ENCODE measurements at regions of chr3 and their contacts with region 1.

Region 1: GRCh38 chr3:187679638-187680396 is 9.6 kb upstream of the SST start:
- DNase-seq: peak; percentile 78
- H3K4me3 Mint-ChIP-seq: no peak overlapping the region
- H3K27ac Mint-ChIP-seq: no peak overlapping the region
- H3K4me1 Mint-ChIP-seq: no peaks in the 10 kb centered on the region
- H3K27me3 Mint-ChIP-seq: peaks cover 15% of the 10 kb centered on the region

Region 2: DNA sequence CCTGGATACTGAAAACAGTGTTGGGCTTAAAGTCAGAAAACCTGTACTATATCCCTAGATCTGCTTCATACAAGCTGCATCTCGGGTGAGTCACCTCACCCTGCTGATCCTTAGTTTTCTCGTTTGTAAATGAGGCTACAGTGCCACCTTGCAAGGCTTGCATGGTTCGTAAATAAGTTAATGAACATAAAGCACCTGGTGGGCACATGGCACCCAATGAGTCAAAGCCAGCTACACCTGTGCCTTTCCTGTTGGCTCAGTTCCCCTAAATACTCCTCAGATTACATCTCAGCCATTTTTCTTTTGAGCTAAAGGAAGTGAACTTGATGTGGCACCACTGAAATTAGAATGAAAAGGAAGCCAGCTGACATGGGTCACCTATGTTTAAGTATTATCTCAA is 456.0 kb before region 1 on chr3:
- CTCF ChIA-PET with region 1: interaction called, 34 read pairs
- DNase-seq: no peak
- H3K4me3 Mint-ChIP-seq: no peak overlapping the region
- H3K27ac Mint-ChIP-seq: no peak overlapping the region
- H3K4me1 Mint-ChIP-seq: no peaks in the 10 kb centered on the region
- H3K27me3 Mint-ChIP-seq: peaks cover 31% of the 10 kb centered on the region

Region 3: DNA sequence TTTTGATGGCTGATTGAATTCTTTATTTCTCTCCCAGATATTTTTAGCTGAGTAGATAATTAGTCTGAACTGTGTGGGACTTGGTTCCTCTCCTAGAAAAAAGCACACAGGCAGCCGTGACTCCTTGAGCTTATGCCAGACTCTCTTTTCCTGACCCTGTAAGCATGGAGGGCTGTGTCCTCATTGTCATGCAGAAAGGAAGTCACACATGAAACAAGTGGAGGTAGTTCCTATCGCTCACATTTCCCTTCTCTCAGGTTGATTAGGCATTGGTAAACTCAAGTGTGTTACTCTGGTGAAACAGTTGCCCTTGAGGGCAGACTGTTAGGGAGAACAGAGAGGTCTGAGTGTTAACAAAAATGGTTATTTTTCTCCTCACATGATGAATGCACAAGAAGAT is 318.0 kb before region 1 on chr3:
- CTCF ChIA-PET with region 1: no interaction called
- DNase-seq: no peak
- H3K4me3 Mint-ChIP-seq: no peak overlapping the region
- H3K27ac Mint-ChIP-seq: no peak overlapping the region
- H3K4me1 Mint-ChIP-seq: peaks cover 12% of the 10 kb centered on the region
- H3K27me3 Mint-ChIP-seq: no peaks in the 10 kb centered on the region

Region 4: DNA sequence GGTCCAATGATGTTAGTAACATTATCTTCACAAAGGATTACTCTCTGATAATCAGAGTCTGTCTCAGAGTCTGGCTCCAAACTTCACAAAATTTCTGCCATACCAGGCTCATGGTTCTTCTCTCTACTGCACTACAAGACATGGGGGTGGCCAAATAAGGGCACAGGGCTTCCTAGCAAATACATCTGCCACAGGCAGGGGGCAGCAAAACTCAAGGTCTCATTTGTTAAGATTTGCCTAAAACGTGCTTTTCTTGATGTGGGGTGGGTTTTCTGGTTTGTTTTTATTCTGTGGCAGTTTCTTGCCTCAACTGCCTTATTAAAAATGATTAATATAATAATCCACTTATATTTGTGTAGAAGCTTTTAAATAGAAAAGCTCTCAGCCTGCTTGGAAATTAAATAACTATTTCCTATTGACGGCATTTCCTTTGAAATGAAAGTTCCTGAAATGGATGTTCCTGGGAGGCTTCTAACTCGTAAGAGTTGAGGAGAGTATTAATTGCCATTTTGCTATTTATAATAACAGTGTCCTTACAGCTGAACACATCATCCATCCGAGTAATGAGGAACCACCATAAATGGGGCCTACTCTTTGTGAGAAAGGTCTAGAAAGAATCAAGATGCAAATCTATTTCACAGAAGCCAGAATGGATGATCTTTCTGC is 63.4 kb before region 1 on chr3:
- CTCF ChIA-PET with region 1: interaction called, 82 read pairs
- DNase-seq: peak; percentile 74
- H3K4me3 Mint-ChIP-seq: no peak overlapping the region
- H3K27ac Mint-ChIP-seq: no peak overlapping the region
- H3K4me1 Mint-ChIP-seq: no peaks in the 10 kb centered on the region
- H3K27me3 Mint-ChIP-seq: peaks cover 17% of the 10 kb centered on the region

Region 5: GRCh38 chr3:187694801-187695200 is 15.0 kb after region 1 on chr3:
- CTCF ChIA-PET with region 1: interaction called, 14 read pairs
- DNase-seq: no peak
- H3K4me3 Mint-ChIP-seq: no peak overlapping the region
- H3K27ac Mint-ChIP-seq: no peak overlapping the region
- H3K4me1 Mint-ChIP-seq: no peaks in the 10 kb centered on the region
- H3K27me3 Mint-ChIP-seq: peaks cover 56% of the 10 kb centered on the region

Region 6: DNA sequence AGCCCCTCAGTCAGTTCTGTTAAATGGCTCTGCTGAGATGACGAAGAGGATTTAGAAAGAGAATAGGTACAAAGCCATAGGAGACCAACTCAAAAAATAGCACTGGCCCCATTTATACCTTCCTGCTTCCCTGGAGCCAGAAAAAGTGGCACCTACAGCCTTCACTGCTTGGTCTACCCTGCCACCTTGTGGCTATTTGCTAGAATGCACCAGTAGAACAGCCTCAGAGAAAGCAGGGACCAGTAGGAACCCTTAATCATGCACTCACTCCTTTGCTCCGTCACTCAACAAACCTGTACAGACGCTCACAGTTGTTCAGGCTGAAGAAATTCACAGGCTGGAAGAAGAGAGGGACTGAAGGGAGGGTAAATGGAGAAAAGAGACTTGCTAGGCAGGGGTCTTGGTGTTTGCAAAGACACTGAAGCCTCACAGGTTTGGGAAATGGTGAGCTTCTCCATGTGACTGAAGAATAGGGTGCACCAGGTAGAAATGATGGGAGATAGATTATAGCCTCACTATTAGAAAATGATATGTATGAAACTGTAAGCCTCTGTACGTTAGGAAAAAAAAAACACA is 34.7 kb after region 1 on chr3:
- CTCF ChIA-PET with region 1: interaction called, 22 read pairs
- DNase-seq: peak; percentile 83
- H3K4me3 Mint-ChIP-seq: no peak overlapping the region
- H3K27ac Mint-ChIP-seq: peak overlapping the region; percentile 26
- H3K4me1 Mint-ChIP-seq: peaks cover 16% of the 10 kb centered on the region
- H3K27me3 Mint-ChIP-seq: peaks cover 4% of the 10 kb centered on the region